B cell (primary cell): ENCODE measurements at regions of chr1 and their contacts with region 1.

Region 1: GRCh38 chr1:218339267-218339831 is 5.8 kb upstream of the TGFB2 start:
- DNase-seq: peak; percentile 54
- ATAC-seq: no peak
- H3K4me3 ChIP-seq: no peak overlapping the region
- H3K4me3 Mint-ChIP-seq: no peak overlapping the region
- H3K27ac ChIP-seq: no peak overlapping the region
- H3K27ac Mint-ChIP-seq: no peak overlapping the region
- H3K4me1 ChIP-seq: peaks cover under 1 to 1% of the 10 kb centered on the region in 2 donors
- H3K4me1 Mint-ChIP-seq: no peaks in the 10 kb centered on the region
- H3K27me3 ChIP-seq: no peaks in the 10 kb centered on the region
- H3K27me3 Mint-ChIP-seq: no peaks in the 10 kb centered on the region
- CTCF ChIP-seq: peak; percentile 90

Region 2: DNA sequence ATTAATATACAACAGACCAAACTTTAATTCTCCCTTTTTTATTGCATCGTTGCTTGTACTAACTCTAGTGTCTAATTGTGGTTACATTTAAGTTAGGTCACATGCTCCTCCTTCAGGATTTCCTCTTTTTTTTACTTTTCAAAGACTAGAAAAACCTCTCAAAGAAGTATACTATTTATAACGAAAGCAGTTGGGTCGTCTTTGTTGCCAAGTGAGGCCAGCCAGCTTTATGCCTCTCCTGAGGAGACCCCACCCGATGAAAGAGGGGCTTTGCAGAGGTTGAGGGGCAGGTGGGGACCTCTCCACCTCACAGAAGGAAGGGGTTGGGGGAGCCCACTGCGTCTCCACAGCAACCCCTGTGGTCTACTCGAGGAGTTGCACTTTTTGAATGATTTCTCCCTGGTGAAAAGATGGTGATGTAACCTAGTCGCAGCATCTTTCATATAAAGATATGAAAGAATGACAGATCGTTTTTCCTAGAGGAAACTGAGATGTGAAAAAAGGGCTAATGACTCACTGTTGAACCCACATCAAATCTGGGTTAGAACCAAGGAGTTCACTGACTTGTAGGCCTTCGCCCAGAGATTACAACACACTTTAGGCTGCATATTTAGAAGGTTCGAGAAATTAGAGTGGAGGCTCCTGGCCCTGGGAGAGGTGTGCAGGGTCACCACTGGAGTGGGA is 12.2 kb after region 1 on chr1:
- CTCF ChIA-PET with region 1: interaction called, 6 read pairs
- POLR2A ChIA-PET with region 1: no interaction called
- intact Hi-C with region 1: loop called (anchors 1 kb)
- DNase-seq: peak; percentile 74
- ATAC-seq: peak; percentile 75
- H3K4me3 ChIP-seq: peak overlapping the region; percentile 30 to 65 (median 48)
- H3K4me3 Mint-ChIP-seq: peak overlapping the region; percentile 75
- H3K27ac ChIP-seq: peak overlapping the region; percentile 62 to 75
- H3K27ac Mint-ChIP-seq: peak overlapping the region; percentile 70
- H3K4me1 ChIP-seq: peaks cover 31 to 33% of the 10 kb centered on the region in 2 donors
- H3K4me1 Mint-ChIP-seq: peaks cover 48% of the 10 kb centered on the region
- H3K27me3 ChIP-seq: no peaks in the 10 kb centered on the region
- H3K27me3 Mint-ChIP-seq: no peaks in the 10 kb centered on the region
- CTCF ChIP-seq: peak; percentile 74

Region 3: GRCh38 chr1:218521375-218522169 is 182.2 kb after region 1 on chr1:
- CTCF ChIA-PET with region 1: interaction called, 19 read pairs
- POLR2A ChIA-PET with region 1: no interaction called
- intact Hi-C with region 1: loop called (anchors 1 kb)
- DNase-seq: peak; percentile 61
- ATAC-seq: no peak
- H3K4me3 ChIP-seq: no peak overlapping the region
- H3K4me3 Mint-ChIP-seq: no peak overlapping the region
- H3K27ac ChIP-seq: no peak overlapping the region
- H3K27ac Mint-ChIP-seq: no peak overlapping the region
- H3K4me1 ChIP-seq: peaks cover 0 to 2% of the 10 kb centered on the region in 2 donors
- H3K4me1 Mint-ChIP-seq: no peaks in the 10 kb centered on the region
- H3K27me3 ChIP-seq: peaks cover 0 to 9% (median 0%) of the 10 kb centered on the region in 4 experiments
- H3K27me3 Mint-ChIP-seq: peaks cover 18% of the 10 kb centered on the region
- CTCF ChIP-seq: peak; percentile 78

Region 4: GRCh38 chr1:219385786-219386427 is 1046.6 kb after region 1 on chr1:
- CTCF ChIA-PET with region 1: interaction called, 11 read pairs
- POLR2A ChIA-PET with region 1: no interaction called
- intact Hi-C with region 1: no loop called
- DNase-seq: peak; percentile 50
- ATAC-seq: peak; percentile 61
- H3K4me3 ChIP-seq: no peak overlapping the region
- H3K4me3 Mint-ChIP-seq: no peak overlapping the region
- H3K27ac ChIP-seq: no peak overlapping the region
- H3K27ac Mint-ChIP-seq: no peak overlapping the region
- H3K4me1 ChIP-seq: no peaks in the 10 kb centered on the region
- H3K4me1 Mint-ChIP-seq: no peaks in the 10 kb centered on the region
- H3K27me3 ChIP-seq: no peaks in the 10 kb centered on the region
- H3K27me3 Mint-ChIP-seq: no peaks in the 10 kb centered on the region
- CTCF ChIP-seq: peak; percentile 76

Region 5: DNA sequence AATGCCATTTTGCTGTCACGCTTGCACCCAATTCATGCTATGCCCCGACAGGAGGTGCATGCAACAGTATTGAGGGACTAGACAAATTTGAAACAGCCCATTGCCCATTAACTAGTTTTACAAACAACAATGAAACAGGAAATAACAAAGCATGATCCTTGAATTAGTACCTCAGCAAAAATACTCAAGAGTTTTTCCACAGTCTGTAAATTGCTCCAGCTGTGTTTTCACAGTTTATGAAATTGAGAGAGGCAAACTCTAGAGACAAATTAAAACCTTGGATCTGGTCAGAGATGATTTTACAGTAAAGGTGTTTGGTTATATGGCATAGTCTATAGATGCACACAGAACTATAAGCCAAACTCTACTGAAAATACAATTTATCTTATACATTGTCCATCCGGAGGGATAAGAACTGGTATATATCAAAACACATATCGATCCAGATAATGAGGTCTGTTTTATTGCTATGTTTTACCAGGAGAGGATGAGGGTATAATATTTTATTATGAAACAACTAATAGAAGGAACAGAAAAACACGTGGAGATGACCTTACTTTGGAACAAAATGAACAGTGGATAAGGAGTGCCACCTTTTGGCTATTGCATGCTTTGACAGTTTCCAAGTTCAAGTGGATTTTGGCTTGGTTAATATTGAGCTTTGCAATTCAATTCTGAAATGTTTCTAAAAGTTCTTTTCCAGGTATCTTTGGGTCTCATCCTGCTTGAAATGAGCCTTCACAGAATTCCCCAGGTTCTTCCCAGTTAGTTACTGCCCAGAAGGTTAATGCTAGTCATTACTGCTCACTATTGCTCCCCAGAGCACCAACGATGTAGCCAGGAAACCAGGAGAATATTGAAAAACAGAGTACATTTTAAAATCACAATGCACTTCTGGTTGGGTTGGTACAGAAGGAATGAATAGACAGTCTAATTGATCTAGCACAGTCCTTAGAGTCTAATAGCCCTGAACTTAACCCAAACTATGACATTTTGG is 1227.9 kb after region 1 on chr1:
- CTCF ChIA-PET with region 1: no interaction called
- POLR2A ChIA-PET with region 1: no interaction called
- intact Hi-C with region 1: loop called (anchors 2 kb)
- DNase-seq: peak; percentile 6
- ATAC-seq: no peak
- H3K4me3 ChIP-seq: no peak overlapping the region
- H3K4me3 Mint-ChIP-seq: no peak overlapping the region
- H3K27ac ChIP-seq: no peak overlapping the region
- H3K27ac Mint-ChIP-seq: no peak overlapping the region
- H3K4me1 ChIP-seq: no peaks in the 10 kb centered on the region
- H3K4me1 Mint-ChIP-seq: no peaks in the 10 kb centered on the region
- H3K27me3 ChIP-seq: no peaks in the 10 kb centered on the region
- H3K27me3 Mint-ChIP-seq: peaks cover 6% of the 10 kb centered on the region
- CTCF ChIP-seq: no peak